Ovary (tissue), 10 donors: ENCODE measurements at regions of chr18 and their contacts with region 1.

Region 1: DNA sequence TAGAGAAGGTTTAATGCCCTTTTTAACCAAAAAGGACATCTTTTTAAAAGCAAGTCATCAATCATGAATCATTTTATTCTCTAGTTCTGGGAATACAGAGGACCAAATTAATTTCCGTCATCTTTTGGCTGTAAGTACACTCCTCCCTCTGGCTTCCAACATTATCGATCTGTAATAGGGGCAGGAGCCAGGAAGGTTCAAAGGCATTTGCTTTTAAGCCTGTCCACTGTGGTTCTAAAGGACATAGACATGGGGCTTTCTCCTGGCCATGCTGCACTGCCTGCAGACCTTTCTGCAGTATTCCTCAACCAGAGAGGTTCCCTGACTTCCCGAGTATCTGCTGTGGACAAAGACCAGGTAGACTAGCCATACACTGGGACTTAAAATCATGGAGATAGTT is 170.5 kb downstream of the MYO5B start:
- DNase-seq: no peak
- H3K4me3 ChIP-seq: no peak overlapping the region
- H3K27ac ChIP-seq: no peak overlapping the region
- H3K4me1 ChIP-seq: no peaks in the 10 kb centered on the region
- H3K27me3 ChIP-seq: no peaks in the 10 kb centered on the region
- CTCF ChIP-seq: no peak
- EP300 ChIP-seq: no peak
- POLR2A ChIP-seq: no peak

Region 2: GRCh38 chr18:50053111-50053510 is 28.6 kb after region 1 on chr18:
- intact Hi-C with region 1: loop called in 1 of 4 experiments (anchors 2 kb)
- DNase-seq: no peak
- H3K4me3 ChIP-seq: no peak overlapping the region
- H3K27ac ChIP-seq: no peak overlapping the region
- H3K4me1 ChIP-seq: no peaks in the 10 kb centered on the region
- H3K27me3 ChIP-seq: no peaks in the 10 kb centered on the region
- CTCF ChIP-seq: no peak
- EP300 ChIP-seq: no peak
- POLR2A ChIP-seq: no peak